SK-N-SH (cell line): ENCODE measurements at regions of chr15 and their contacts with region 1.

Region 1: DNA sequence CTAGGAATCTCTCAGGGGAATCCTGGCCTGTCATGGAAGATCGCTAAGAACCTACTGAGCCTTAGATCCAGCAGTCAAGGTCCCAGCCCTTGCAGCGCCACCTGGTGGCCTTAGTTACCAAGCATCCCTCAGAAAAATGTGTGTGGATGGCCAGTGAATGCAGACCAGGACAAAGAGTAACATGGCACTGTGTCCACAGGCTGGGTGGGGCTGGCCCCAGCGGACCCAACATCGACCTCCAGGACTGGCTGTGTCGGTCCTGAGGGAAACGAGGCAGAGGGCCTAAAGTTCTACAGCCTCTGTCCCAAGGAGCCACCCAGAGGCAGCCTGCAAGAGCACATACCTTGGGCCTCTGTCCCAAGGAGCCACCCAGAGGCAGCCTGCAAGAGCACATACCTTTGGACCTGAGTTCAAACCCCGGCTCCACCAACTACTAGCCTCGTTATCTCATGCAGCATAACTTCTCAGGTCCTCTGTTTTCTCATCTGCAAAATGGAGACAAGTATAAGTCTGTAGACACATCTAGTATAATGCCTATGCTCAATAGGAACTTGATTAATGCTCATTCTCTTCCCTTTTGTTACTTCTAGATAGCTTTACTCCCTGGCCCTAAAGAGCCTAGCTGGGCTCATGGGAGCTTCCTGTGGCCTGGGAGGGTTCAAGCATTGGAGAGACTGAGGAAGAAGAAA is 57.5 kb upstream of the HERC1 start:
- DNase-seq: peak; percentile 80
- H3K4me3 ChIP-seq: no peak overlapping the region; a peak in 1 of 4 replicates
- H3K27ac ChIP-seq: no peak overlapping the region
- H3K4me1 ChIP-seq: no peaks in the 10 kb centered on the region; a peak in 1 of 4 replicates
- H3K27me3 ChIP-seq: no peaks in the 10 kb centered on the region
- CTCF ChIP-seq: peak; percentile 90
- EP300 ChIP-seq: no peak
- RAD21 ChIP-seq: peak; percentile 80

Region 2: GRCh38 chr15:63573533-63573932 is 317.7 kb before region 1 on chr15:
- CTCF ChIA-PET with region 1: no interaction called
- POLR2A ChIA-PET with region 1: no interaction called
- DNase-seq: no peak
- H3K4me3 ChIP-seq: no peak overlapping the region
- H3K27ac ChIP-seq: no peak overlapping the region
- H3K4me1 ChIP-seq: peaks cover 0 to 3% of the 10 kb centered on the region in 2 experiments; a peak in 3 of 4 replicates
- H3K27me3 ChIP-seq: no peaks in the 10 kb centered on the region
- CTCF ChIP-seq: no peak
- EP300 ChIP-seq: no peak
- RAD21 ChIP-seq: no peak

Region 3: GRCh38 chr15:63735449-63735848 is 155.8 kb before region 1 on chr15:
- CTCF ChIA-PET with region 1: no interaction called
- POLR2A ChIA-PET with region 1: no interaction called
- DNase-seq: no peak
- H3K4me3 ChIP-seq: no peak overlapping the region
- H3K27ac ChIP-seq: no peak overlapping the region
- H3K4me1 ChIP-seq: no peaks in the 10 kb centered on the region
- H3K27me3 ChIP-seq: no peaks in the 10 kb centered on the region
- CTCF ChIP-seq: no peak
- EP300 ChIP-seq: no peak
- RAD21 ChIP-seq: no peak

Region 4: GRCh38 chr15:63905558-63906265 is 14.5 kb after region 1 on chr15:
- CTCF ChIA-PET with region 1: interaction called, 26 read pairs
- POLR2A ChIA-PET with region 1: no interaction called
- DNase-seq: no peak
- H3K4me3 ChIP-seq: no peak overlapping the region
- H3K27ac ChIP-seq: no peak overlapping the region
- H3K4me1 ChIP-seq: peaks cover 19 to 23% of the 10 kb centered on the region in 2 experiments; a peak in 3 of 4 replicates
- H3K27me3 ChIP-seq: no peaks in the 10 kb centered on the region
- CTCF ChIP-seq: no peak
- EP300 ChIP-seq: no peak
- RAD21 ChIP-seq: no peak

Region 5: DNA sequence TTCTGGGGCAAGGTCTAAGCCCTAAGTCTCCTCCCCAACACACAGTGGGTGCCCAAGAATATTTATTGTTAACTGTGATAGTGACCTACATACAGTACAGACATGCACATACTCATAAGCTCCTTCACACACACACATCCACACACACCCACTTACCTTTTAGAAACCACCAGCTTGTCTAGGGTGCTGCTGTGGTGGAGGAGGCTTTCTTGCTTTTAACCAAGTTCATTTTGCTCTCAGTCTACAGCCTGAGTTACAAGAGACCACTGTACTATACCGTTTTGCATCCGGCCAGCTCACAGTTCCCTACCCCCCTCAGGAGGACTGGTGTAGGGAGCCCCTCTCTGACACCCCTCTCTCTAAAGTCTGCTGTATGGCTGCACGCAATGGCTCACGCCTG is 138.4 kb after region 1 on chr15:
- CTCF ChIA-PET with region 1: no interaction called
- POLR2A ChIA-PET with region 1: no interaction called
- DNase-seq: no peak
- H3K4me3 ChIP-seq: no peak overlapping the region
- H3K27ac ChIP-seq: no peak overlapping the region
- H3K4me1 ChIP-seq: no peaks in the 10 kb centered on the region; a peak in 1 of 4 replicates
- H3K27me3 ChIP-seq: no peaks in the 10 kb centered on the region
- CTCF ChIP-seq: no peak
- EP300 ChIP-seq: no peak
- RAD21 ChIP-seq: no peak

Region 6: DNA sequence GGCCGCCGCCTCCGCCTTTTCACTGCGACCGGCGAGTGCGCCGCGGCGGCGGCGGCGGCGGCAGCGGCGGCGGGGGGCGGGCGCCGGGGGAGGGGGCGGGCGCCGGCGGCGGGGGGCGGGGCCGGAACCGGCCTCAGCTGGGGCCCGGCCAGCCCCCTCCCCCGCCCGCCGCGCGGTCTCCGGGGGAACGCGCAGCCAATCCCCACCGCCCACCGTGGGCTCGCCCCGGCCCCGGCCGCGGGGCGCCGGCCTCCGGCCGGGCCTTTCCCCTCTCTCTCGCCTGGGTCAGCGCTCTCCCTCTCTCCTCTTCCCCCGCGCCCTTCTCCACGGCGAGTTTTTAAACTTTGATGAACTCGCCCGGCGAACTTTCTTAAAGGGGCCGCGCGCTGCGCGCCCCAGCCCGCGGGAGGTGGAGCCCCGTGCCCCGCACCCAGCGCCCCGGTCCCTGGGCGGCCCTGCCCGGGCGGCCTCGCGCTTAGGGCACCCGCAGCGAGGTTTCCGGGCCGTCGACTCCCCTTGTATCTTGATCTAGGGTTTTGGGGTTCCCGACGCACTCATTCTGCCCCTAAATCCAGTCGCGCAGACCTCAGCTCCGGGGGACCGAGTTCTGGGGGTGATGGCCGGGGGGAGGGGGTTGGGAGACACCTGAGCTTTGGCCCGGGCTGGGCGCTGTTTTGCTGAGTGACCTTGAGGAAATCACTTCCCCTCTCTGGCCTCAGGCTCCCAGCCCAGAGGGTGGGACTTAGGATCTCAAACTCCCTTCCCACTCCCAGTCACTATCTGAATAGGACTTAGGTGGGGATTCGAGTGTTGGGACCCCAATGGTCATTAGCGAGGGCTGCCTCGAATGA is 884.6 kb after region 1 on chr15 and contains the start of gene RBPMS2:
- CTCF ChIA-PET with region 1: no interaction called
- POLR2A ChIA-PET with region 1: no interaction called
- DNase-seq: peak; percentile 90
- H3K4me3 ChIP-seq: peak within 1 kb of the TSS; percentile 67 to 87
- H3K27ac ChIP-seq: peak within 1 kb of the TSS; percentile 18 to 56; a peak in 1 of 4 replicates
- H3K4me1 ChIP-seq: peaks cover 4 to 10% of the 10 kb centered on the region in 2 experiments; a peak in 1 of 4 replicates
- H3K27me3 ChIP-seq: no peaks in the 10 kb centered on the region
- CTCF ChIP-seq: no peak
- EP300 ChIP-seq: no peak
- RAD21 ChIP-seq: no peak
- polyA plus RNA-seq, gene RBPMS2: 2.6 and 6.5 TPM in 2 replicates